Endothelial cell of umbilical vein (primary cell): ENCODE measurements at regions of chr20 and their contacts with region 1.

Region 1: DNA sequence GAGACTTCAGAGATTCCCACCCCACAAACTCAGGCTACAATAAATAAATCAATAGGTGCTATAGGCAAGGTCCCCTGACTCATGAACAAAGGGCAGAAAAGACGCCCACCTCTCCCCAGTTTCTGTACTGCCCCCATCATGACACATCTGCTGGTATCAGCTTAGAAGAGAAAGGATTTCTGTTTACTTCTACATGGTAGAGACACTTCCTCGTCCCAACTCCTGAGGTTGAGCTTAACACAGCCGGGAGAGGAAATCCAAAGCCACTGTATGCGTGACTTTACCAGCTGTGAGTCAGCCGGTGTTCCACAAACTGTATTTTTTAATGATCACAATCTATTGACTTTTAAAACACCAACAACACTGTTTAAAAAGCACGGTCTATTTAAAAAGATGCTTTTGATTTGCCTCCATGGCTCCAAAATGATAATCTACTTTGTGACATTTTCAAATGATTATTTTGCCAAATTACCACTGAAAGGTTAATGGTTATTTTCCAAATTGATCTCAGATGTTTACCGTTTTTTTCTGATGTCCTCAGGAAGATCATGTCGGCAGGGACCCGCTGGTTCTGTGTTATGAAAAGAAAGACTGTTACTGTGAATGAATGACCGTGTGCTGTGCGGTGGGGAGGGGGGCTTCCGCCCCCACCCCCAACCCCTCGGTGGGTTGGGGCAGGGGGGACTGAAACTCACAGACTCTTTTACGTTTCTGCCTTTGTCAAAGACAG is 72.5 kb downstream of the ATP9A start:
- DNase-seq: peak; percentile 96
- H3K4me3 ChIP-seq: peak overlapping the region in 1 of 3 experiments; percentile 8
- H3K27ac ChIP-seq: peak overlapping the region; percentile 98
- H3K4me1 ChIP-seq: peaks cover 31% of the 10 kb centered on the region
- H3K27me3 ChIP-seq: no peaks in the 10 kb centered on the region
- CTCF ChIP-seq: no peak
- POLR2A ChIP-seq: no peak

Region 2: GRCh38 chr20:51650685-51651134 is 45.0 kb before region 1 on chr20:
- CTCF ChIA-PET with region 1: interaction called, 11 read pairs
- POLR2A ChIA-PET with region 1: no interaction called
- dilution Hi-C with region 1: no loop called
- intact Hi-C with region 1: no loop called
- DNase-seq: peak; percentile 85
- H3K4me3 ChIP-seq: no peak overlapping the region
- H3K27ac ChIP-seq: peak overlapping the region; percentile 21
- H3K4me1 ChIP-seq: peaks cover 24% of the 10 kb centered on the region
- H3K27me3 ChIP-seq: no peaks in the 10 kb centered on the region
- CTCF ChIP-seq: no peak
- POLR2A ChIP-seq: no peak

Region 3: GRCh38 chr20:51742685-51743357 is 47.1 kb after region 1 on chr20:
- CTCF ChIA-PET with region 1: interaction called, 10 read pairs
- POLR2A ChIA-PET with region 1: no interaction called
- dilution Hi-C with region 1: no loop called
- intact Hi-C with region 1: no loop called
- DNase-seq: peak; percentile 36
- H3K4me3 ChIP-seq: no peak overlapping the region
- H3K27ac ChIP-seq: peak overlapping the region; percentile 21
- H3K4me1 ChIP-seq: peaks cover 17% of the 10 kb centered on the region
- H3K27me3 ChIP-seq: no peaks in the 10 kb centered on the region
- CTCF ChIP-seq: no peak
- POLR2A ChIP-seq: no peak

Region 4: DNA sequence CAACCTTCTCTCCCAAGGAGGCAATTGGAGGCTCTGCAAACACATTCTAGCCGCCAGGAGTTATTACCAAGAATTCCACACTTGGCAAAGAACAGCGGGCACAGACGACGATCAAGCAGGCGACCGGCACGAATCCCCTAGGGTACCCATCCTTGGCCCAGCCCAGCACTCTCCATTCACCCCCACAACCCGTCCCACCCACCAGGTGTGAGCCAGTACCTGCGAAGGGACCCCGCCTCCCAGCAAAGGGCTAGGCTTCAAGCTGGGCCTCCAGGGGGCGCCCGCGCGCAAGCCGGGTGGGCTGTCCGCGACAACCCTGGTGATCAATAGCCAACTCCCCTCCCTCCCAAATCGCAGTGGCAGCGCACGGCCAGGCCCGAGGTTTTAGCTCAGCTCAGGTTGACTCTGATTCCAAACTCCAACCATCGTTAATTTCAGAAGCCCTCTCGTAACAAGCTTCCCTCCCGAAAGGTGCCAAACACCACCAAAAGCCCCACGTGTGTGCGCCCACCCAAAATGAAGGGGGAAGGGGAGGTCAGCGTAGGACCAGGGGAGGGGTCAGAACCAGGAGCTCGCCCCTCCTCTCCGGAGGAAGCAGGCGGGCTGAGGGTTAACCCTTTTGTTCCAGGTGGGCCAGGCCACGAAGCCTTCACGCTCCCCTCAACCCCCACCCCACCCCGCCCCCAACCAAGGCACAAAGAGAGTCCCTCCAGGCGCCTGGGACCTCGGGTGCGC is 104.5 kb after region 1 on chr20:
- CTCF ChIA-PET with region 1: interaction called, 23 read pairs
- POLR2A ChIA-PET with region 1: no interaction called
- dilution Hi-C with region 1: no loop called
- intact Hi-C with region 1: loop called (anchors 5 kb)
- DNase-seq: peak; percentile 62
- H3K4me3 ChIP-seq: peak overlapping the region; percentile 49 to 80 (median 78)
- H3K27ac ChIP-seq: no peak overlapping the region
- H3K4me1 ChIP-seq: peaks cover 14% of the 10 kb centered on the region
- H3K27me3 ChIP-seq: peaks cover 10 to 30% of the 10 kb centered on the region in 2 experiments
- CTCF ChIP-seq: peak; percentile 95 to 99
- POLR2A ChIP-seq: no peak

Region 5: DNA sequence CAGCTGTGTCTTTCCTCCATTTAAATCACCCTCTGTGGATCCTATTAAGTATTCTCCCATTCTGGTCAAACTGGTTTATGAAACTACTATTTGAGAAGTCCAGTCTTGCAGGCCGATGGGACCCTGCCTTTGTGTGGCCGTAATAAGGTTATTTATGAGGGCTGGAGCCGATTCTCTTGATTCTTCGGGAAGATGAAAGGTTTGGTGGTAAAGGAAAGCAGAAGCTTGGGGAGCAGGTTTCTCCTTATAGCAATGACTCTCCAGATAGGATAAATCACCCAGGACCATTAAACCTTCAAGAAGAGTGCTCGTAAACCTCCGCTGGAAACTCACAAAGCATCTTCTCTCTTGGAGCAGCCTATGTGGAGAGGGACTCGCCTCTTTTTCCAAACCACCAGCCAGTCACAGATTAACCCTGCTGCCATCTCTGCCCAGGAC is 176.1 kb after region 1 on chr20:
- CTCF ChIA-PET with region 1: no interaction called
- POLR2A ChIA-PET with region 1: no interaction called
- dilution Hi-C with region 1: no loop called
- intact Hi-C with region 1: no loop called
- DNase-seq: no peak
- H3K4me3 ChIP-seq: no peak overlapping the region
- H3K27ac ChIP-seq: no peak overlapping the region
- H3K4me1 ChIP-seq: no peaks in the 10 kb centered on the region
- H3K27me3 ChIP-seq: no peaks in the 10 kb centered on the region
- CTCF ChIP-seq: no peak
- POLR2A ChIP-seq: no peak

Region 6: DNA sequence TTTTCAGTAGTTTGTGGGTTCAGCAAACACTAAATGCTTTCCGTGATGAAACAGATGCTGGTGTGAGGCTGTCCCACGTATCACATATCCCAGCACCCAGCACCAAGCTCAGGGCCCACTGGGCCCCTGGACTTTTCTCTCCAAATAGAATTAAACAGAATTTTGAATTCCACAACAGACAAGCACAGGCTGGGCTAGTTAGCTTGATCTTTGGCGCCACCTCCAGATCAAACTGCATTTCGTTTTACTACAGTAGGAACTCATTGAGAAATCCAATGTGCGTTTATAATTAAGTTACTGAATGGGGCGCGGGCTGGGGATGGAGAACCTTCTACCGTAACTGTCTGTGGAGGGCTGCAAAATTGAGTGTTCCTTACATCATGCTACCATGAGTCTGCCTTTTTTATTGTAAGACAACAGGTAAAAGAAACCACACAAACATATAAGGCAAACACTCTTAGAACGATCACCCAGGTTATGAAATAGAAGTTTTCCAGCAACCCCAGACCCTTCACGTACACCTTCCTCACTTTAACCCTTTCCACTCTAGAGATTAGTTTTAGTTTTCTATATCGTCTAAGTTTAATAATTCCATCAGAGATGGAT is 388.0 kb after region 1 on chr20:
- CTCF ChIA-PET with region 1: interaction called, 47 read pairs
- POLR2A ChIA-PET with region 1: no interaction called
- dilution Hi-C with region 1: no loop called
- intact Hi-C with region 1: loop called (anchors 1 kb)
- DNase-seq: peak; percentile 75
- H3K4me3 ChIP-seq: no peak overlapping the region
- H3K27ac ChIP-seq: no peak overlapping the region
- H3K4me1 ChIP-seq: no peaks in the 10 kb centered on the region
- H3K27me3 ChIP-seq: no peaks in the 10 kb centered on the region
- CTCF ChIP-seq: peak; percentile 51 to 56
- POLR2A ChIP-seq: no peak